ENCODE measurements at regions of chr3 and their contacts with region 1.

Region 1: DNA sequence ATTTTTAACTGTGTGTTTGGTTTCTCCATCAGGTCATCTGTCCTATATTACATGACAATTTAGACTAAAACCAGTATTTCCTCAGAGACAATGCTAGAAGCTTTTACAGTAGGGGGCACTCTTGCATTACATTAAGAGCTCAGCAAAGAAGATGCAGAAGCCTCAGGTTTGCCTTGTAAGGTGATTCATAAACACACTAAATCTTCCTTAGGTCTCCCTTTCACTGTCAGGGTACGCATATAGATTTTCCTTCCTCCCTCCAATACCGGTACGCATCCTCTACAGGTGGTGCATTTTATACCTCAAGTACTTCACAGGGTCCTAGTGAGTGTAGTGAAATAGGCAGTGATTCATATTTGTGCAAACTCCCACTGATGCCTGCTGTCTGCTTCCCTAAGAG is 46.5 kb downstream of the CD86 start:
- DNase-seq: peak; percentile 85
- H3K4me3 Mint-ChIP-seq: peak overlapping the region; percentile 71
- H3K27ac Mint-ChIP-seq: peak overlapping the region; percentile 80
- H3K4me1 Mint-ChIP-seq: peaks cover 37% of the 10 kb centered on the region
- H3K27me3 Mint-ChIP-seq: peaks cover 1% of the 10 kb centered on the region

Region 2: DNA sequence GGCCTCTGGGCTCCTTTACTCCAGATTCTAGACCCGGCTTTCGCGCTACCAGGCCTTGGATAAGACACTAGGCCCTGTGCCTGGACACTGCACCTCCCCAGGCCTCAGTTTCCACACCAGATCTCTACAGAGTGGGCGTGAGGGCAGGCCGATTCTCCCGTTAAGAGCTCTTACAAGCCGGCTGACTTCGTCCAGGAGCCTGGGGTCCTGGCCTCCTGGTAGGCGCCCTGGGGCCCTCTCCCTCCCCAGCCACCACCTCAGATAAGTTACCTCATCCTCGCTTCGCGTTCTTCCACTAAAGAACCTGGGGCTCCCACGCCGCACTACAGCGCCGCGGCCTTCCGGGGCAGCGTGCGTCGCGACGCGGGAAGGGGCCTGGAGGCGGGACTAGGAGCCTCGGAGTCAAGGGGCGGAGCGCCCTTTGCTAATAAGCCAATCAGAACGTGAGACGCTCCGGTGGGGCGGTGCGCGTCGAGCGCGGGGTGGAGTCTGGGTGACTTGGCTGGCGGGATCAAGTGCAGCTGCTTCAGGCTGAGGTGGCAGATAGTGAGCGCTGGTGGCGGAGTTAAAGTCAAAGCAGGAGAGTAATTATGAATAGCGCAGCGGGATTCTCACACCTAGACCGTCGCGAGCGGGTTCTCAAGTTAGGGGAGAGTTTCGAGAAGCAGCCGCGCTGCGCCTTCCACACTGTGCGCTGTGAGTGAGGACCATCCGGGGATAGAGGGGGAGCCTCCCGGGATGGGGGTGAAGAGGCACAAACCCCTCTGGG is 266.8 kb before region 1 on chr3 and contains the starts of genes EAF2 and IQCB1:
- intact Hi-C with region 1: loop called (anchors 5 kb)
- DNase-seq: peak; percentile 99
- H3K4me3 Mint-ChIP-seq: peak within 1 kb of the TSS; percentile 90
- H3K27ac Mint-ChIP-seq: peak within 1 kb of the TSS; percentile 96
- H3K4me1 Mint-ChIP-seq: peaks cover 41% of the 10 kb centered on the region
- H3K27me3 Mint-ChIP-seq: no peaks in the 10 kb centered on the region
- total RNA-seq, gene EAF2: 13.7 and 14.5 TPM in 2 replicates
- total RNA-seq, gene IQCB1: 49.1 and 51.6 TPM in 2 replicates

Region 3: DNA sequence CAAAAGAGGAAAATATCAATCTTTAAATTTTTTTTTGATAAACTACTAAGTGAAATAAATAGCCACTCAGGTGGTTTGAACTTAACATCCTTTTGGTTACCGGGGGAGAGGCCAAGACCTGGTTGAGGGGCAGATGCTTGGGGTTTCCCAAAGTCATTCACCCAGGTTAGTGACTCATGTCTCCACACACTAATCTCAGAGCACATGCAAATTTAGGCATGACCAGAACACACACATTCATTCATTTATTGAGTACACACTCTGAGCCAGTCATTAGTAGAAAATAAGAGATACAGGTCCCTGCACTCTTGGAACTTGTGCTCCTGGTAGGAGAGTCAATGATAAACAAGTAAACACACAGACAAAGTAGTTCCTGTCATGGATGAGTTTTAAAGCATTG is 86.9 kb before region 1 on chr3:
- intact Hi-C with region 1: loop called (anchors 5 kb)
- DNase-seq: no peak
- H3K4me3 Mint-ChIP-seq: no peak overlapping the region
- H3K27ac Mint-ChIP-seq: no peak overlapping the region
- H3K4me1 Mint-ChIP-seq: peaks cover 21% of the 10 kb centered on the region
- H3K27me3 Mint-ChIP-seq: peaks cover 19% of the 10 kb centered on the region

Region 4: GRCh38 chr3:122146466-122146865 is 44.8 kb after region 1 on chr3:
- intact Hi-C with region 1: loop called (anchors 1 kb)
- DNase-seq: peak; percentile 85
- H3K4me3 Mint-ChIP-seq: peak overlapping the region; percentile 19
- H3K27ac Mint-ChIP-seq: peak overlapping the region; percentile 91
- H3K4me1 Mint-ChIP-seq: peaks cover 19% of the 10 kb centered on the region
- H3K27me3 Mint-ChIP-seq: peaks cover under 1% of the 10 kb centered on the region

Region 5: GRCh38 chr3:122299872-122300460 is 198.3 kb after region 1 on chr3:
- intact Hi-C with region 1: loop called (anchors 1 kb)
- DNase-seq: peak; percentile 84
- H3K4me3 Mint-ChIP-seq: no peak overlapping the region
- H3K27ac Mint-ChIP-seq: no peak overlapping the region
- H3K4me1 Mint-ChIP-seq: peaks cover 21% of the 10 kb centered on the region
- H3K27me3 Mint-ChIP-seq: no peaks in the 10 kb centered on the region

Region 6: DNA sequence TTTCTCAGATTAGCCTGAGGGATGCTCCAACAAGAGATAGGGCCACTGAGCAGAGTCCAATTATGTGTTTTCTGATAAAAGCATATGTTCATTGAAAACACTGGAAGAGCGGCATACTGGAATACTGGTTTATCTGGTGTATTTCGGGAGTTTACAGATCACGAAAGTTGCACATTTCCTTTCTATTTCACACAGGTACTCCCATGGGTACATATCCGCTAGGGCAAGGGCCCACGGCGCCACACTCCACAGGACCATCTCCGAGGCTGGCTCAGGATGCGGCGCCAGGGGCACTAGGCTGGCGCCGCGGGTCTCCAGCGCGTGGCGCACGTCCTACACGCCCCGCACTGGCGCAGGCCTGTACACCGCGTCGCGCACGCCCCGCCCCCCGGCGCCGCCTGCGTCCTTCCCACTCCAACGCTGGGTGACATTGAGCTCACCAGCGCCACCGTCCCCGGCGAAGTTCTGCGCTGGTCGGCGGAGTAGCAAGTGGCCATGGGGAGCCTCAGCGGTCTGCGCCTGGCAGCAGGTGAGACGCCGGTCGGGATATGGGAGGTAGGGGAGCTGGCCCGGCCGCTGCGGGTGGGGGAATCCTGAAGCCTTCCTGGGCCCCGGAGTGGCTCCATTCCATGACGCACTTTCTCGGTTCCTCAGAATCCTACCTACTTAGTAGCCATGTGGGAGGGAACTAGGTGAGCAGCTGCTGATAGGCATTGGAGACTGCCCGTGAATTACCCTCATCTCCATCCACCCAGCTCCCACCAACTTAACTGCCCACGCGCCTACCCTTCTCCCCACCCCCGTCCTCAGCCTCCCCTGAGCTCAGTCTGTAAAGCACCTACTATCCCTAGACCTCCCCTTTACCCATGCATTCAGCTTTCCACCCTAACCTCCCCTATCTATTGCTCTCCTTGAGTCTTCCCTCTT is 282.4 kb after region 1 on chr3 and contains the start of gene FAM162A:
- intact Hi-C with region 1: loop called (anchors 1 kb)
- DNase-seq: peak; percentile 98
- H3K4me3 Mint-ChIP-seq: peak within 1 kb of the TSS; percentile 97
- H3K27ac Mint-ChIP-seq: peak within 1 kb of the TSS; percentile 96
- H3K4me1 Mint-ChIP-seq: peaks cover 64% of the 10 kb centered on the region
- H3K27me3 Mint-ChIP-seq: no peaks in the 10 kb centered on the region
- total RNA-seq, gene FAM162A: 77.8 and 84.9 TPM in 2 replicates

Region 7: DNA sequence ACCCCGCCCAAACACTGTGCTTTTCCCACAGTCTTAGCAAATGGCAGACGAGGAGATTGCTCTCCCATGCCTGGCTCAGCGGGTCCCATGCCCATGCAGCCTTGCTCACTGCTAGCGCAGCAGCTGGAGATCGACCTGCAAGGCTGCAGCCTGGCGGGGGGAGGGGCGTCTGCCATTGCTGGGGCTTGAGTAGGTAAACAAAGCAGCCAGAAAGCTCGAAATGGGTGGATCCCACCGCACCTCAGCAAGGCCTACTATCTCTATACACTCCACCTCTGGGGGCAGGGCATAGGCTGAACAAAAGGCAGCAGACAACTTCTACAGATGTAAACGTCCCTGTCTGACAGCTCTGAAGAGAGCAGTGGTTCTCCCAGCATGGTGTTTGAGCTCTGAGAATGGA is 341.4 kb after region 1 on chr3:
- intact Hi-C with region 1: no loop called
- DNase-seq: no peak
- H3K4me3 Mint-ChIP-seq: no peak overlapping the region
- H3K27ac Mint-ChIP-seq: no peak overlapping the region
- H3K4me1 Mint-ChIP-seq: peaks cover 4% of the 10 kb centered on the region
- H3K27me3 Mint-ChIP-seq: no peaks in the 10 kb centered on the region

Region 8: GRCh38 chr3:122577409-122578031 is 475.9 kb after region 1 on chr3 and contains the start of gene PARP15:
- intact Hi-C with region 1: no loop called
- DNase-seq: peak; percentile 85
- H3K4me3 Mint-ChIP-seq: peak within 1 kb of the TSS; percentile 89
- H3K27ac Mint-ChIP-seq: peak within 1 kb of the TSS; percentile 98
- H3K4me1 Mint-ChIP-seq: peaks cover 54% of the 10 kb centered on the region
- H3K27me3 Mint-ChIP-seq: no peaks in the 10 kb centered on the region
- total RNA-seq, gene PARP15: 10.8 and 12.1 TPM in 2 replicates

Region 9: DNA sequence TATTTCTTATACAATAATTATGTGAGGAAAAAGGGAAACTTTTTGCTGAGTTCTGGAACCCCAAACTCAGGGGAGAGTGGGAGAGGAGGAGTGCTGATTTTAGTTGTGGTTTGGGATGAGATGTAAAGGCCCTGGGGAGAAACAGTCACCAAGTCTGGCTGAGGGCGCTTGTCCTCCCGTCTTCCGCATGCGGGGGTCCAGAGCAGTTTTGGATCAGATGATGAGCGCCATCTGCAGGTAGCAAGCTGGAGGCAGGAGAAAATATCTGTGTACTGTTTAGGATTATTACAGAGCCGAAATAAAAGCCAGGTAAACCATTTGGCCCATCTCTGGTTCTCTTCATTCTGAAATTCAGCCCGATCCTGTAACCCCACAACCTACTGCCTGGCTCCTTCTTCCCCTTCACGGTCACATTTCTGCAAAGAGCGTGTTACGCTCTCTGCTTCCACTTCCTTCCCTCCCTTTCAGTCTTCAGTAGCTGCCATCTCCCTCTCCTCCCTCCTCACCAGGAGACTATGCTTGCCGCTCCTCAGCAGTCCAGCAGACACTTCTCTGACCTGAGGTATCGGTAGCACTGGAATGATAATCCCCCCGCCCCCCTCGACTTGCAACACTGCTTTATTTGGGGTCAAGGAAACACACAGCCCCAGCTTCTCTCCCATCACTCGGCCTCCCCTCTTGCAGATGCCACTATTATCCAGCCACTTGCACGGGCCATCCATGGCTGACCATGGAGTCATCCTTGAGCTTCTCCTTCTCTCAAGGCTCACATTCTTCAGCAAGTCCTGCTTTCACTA is 577.6 kb after region 1 on chr3:
- intact Hi-C with region 1: loop called (anchors 2 kb)
- DNase-seq: peak; percentile 94
- H3K4me3 Mint-ChIP-seq: peak overlapping the region; percentile 99
- H3K27ac Mint-ChIP-seq: peak overlapping the region; percentile 98
- H3K4me1 Mint-ChIP-seq: peaks cover 56% of the 10 kb centered on the region
- H3K27me3 Mint-ChIP-seq: no peaks in the 10 kb centered on the region